AG04449 (cell line): ENCODE measurements at regions of chr15 and their contacts with region 1.

Region 1: DNA sequence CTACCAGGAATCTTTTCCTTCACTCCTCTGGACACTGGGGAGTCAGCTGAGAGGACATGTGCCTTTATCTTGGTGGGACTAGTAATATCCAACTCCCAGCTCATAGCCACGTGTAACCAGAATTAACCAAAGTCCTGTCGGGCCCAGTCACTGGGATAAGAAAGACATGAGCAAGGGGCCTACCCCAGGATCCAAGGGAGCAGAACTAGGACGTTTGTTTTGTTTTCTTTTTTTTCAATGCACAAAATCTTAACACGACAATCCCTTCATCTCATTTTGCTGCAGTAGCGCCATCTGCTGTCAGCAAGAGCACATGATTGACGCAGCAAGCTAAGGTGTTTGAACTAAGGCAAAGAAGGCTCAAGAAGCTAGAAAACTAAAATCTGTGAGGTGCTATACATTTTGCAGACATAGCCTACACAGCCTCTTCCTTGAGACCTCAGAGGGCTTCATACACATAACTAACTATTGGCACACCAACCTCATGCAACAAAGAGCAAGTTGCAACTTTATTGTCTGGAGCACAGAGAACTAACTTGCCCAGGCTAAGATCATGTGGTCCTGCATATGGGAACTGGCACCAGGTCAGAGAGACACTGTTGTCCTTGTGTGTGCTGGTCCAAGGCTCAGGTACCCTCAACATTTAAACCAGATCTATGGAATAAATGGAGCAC is 43.6 kb downstream of the RLBP1 start:
- DNase-seq: peak; percentile 37
- H3K4me3 ChIP-seq: no peak overlapping the region
- CTCF ChIP-seq: peak; percentile 80

Region 2: DNA sequence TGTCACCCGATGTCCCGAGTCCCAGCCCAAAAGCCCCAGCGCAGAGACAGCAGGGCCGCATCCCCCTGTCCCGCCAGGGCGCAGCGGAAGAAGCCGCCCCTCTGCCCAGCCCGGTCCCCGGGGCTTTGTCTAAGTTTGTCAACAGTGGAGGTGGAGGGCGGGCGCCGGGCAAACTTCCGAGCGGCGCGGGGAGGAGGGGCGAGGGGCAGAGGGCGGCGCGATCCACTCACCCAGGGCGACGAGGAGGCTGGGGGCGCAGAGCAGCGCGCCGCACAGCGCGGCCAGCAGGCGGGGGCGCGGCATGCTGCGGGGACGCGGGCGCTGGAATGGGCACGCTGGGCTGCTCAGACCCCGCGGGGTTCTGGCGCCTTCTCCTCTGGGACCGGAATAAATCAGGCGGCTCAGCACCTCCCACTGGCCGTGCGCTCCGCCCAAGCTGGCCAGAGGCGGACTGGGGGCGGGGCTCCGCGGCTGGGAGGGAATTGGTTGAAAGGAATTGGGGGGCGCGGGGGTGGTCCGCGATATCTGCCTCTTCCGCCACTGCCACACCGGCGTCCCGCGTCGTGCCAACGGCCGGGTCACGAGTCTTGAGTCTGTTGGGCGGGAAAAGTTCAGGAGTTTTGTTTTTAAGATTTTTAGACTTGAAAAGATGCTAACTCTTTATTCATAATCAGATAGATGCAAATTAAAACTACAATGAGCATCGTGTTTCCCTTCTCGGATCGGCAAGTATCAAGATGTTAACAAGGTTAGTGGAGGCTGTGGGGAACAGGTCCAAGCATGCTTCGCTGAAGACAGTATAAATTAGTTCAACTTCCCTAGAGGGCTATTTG is 264.5 kb before region 1 on chr15 and contains the start of gene MFGE8:
- CTCF ChIA-PET with region 1: interaction called, 14 read pairs
- POLR2A ChIA-PET with region 1: no interaction called
- DNase-seq: no peak
- H3K4me3 ChIP-seq: peak within 1 kb of the TSS; percentile 65
- CTCF ChIP-seq: peak; percentile 0

Region 3: DNA sequence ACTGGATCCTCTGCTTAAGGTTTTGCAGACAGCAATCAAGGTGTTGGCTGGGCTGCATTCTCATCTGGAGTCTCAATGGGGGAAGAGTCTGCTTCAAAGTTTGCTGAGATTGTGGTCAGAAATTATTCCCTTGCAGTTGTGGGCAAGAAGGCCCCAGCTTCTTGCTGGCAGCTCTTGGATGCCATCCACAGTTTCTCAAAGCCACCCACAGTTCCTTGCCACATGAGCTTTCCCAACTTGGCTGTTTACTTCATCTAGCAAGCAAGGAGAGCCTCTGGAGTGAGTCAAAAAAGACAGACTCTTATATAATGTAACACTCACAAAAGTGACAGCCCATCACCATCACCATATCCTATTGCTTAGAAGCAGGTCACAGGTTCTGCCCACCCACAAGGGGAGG is 151.6 kb before region 1 on chr15:
- CTCF ChIA-PET with region 1: interaction called, 18 read pairs
- POLR2A ChIA-PET with region 1: no interaction called
- DNase-seq: no peak
- H3K4me3 ChIP-seq: no peak overlapping the region
- CTCF ChIP-seq: no peak

Region 4: DNA sequence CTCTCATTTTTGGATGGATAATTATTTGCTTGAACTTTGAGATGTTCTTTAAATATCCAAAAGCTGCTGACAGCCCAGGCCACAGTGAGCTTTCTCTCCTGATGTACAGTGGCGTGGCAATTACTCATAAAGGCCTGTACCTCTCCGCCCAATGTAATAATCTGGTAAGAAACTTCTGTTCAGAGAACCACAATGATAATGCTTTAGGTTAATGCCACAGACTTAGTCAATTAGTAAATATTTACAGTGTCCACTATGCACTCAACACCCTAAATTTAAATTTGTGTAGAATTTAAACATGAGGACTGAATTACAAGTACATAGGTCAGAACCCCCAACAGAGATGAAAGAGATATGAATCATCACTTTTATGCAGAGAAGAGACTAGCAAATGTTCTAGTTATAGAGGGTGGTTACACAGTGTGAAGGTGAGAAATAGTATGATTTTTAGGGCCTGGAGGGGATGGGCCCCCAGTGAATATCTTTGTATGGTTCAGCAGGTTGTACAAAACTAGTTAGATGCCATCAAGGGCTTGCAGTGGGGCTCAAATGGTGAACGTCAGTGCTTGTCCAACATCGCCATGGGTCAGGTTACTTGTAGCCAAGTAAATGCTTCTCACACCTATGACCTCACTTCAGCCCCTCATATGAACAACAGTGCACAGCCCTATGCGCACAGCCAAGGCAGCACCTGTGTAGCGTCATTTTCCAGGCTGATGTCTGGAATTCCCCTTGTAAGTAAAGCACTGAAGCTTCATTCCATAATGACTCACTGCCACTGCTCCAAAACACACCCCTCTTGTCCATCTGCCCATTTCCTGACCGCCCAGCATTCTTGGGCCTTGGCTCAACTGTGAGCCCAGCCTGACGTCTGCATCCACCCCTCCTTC is 76.2 kb before region 1 on chr15:
- CTCF ChIA-PET with region 1: interaction called, 11 read pairs
- POLR2A ChIA-PET with region 1: no interaction called
- DNase-seq: peak; percentile 93
- H3K4me3 ChIP-seq: no peak overlapping the region
- CTCF ChIP-seq: no peak

Region 5: DNA sequence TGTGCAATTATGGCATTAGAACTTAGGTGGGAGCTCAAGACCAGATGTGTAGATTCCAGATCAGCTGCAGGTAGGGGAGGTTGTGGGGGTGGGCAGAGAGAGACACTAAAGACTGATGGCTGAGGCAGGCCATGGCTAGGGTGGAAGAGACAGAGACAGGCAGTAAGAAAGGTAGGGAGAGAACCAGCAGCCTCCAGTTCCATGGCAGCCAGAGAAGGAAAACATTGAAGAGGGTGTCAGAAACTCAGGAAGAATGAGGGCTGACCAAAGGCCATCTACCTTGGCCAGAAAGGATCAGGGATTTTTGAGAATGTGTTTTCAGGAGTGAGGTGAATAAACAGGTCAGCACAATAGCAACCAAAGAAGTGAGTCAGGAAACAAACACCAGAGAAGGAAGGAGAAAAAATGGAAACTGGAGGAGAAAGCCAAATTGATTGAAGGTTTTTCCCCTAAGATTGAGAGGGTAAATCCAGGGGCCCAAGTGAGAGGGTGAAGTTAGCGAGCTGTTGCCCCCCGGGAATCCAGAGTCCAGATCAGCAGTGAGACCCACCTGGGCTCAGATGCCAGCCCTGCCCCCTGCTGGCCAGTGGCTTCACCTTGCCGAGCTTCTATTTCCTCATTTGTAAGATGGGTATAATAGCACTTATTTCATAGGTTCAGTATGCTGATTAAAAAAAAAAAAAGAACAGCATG is 48.5 kb before region 1 on chr15:
- CTCF ChIA-PET with region 1: interaction called, 20 read pairs
- POLR2A ChIA-PET with region 1: no interaction called
- DNase-seq: no peak
- H3K4me3 ChIP-seq: no peak overlapping the region
- CTCF ChIP-seq: peak; percentile 70

Region 6: GRCh38 chr15:89164712-89165211 is 13.0 kb before region 1 on chr15:
- CTCF ChIA-PET with region 1: interaction called, 74 read pairs
- POLR2A ChIA-PET with region 1: interaction called, 3 read pairs
- DNase-seq: no peak
- H3K4me3 ChIP-seq: no peak overlapping the region
- CTCF ChIP-seq: no peak

Region 7: DNA sequence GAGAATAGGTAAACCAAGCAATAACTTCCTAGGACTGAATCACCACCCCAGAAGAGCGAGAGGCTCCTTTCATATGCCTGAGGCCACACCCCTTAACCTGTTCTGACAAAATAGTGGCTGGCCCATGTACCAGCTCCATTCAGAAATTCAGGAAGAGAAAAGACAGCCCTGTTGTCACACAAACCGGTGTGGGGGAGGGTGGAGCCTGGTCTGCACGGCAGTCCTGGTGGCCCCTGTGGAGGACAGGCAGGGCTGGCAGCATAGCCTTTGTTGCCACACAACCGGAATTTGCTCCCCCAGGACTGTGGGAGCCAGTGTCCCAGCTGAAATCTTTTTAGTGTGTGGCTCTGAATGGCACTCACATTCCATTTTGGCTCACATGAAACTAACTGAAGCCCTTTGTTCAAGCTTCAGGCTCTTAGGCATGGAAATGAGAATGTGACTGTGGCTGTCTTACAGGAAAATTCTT is 19.8 kb after region 1 on chr15:
- CTCF ChIA-PET with region 1: interaction called, 17 read pairs
- POLR2A ChIA-PET with region 1: no interaction called
- DNase-seq: no peak
- H3K4me3 ChIP-seq: no peak overlapping the region
- CTCF ChIP-seq: no peak

Region 8: DNA sequence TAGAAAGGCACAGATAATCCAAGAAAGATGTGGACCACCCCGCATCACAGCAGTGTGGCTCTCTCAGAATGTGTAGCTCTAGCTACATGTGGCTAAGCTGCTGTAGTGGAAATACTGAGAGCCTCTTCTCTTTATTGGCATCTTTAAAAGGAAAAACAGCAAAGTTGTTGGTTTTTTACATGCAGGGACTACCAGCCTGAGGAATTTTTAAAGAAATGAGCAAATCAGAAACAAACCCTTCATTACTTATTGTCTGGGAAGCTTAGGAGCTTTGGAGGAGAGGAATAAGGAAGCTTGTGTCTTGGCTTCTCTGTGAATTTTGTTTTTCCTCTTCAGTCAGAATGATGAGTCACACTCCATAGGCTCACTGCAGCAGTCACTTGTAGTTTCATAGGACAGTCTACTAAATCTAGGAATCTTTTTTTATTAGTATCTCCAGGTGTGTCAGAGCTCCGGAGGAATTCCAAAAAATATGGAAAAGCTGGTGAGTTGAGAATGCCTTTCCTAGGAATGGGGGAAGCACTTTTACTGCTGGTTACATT is 129.3 kb after region 1 on chr15:
- CTCF ChIA-PET with region 1: no interaction called
- POLR2A ChIA-PET with region 1: no interaction called
- DNase-seq: peak; percentile 9
- H3K4me3 ChIP-seq: no peak overlapping the region
- CTCF ChIP-seq: no peak